IMR-90 (cell line): ENCODE measurements at regions of chr2 and their contacts with region 1.

Region 1: DNA sequence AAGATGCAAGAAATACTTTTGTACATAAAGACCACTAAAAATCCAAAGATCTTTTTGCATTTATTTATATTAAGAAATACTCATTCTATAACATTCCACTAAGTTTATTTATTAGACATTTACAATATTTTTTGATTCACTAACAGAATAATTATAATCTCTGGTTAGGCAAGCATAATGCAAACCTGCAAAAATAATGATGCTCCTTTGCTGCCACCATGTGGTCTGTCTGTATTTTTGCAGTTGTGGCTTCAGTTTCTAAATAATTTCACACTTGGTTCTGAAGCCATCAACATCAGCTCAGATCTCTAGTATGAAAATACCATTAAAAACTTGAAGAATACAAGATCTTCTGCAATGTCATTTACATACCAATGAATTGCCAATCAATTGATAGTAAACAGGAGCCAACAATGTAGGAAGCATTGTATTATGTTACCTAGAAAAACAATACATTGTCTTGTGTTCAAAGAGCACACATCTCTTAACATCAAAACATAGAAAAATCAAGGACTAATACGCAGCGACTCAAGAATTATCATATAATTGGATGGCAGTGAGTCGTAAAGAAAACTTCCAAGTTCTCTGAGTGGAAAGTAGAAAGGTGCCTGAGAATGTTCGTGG is 28.8 kb upstream of the WDR75 start:
- DNase-seq: peak; percentile 74
- ATAC-seq: peak; percentile 70
- H3K4me3 ChIP-seq: no peak overlapping the region
- H3K27ac ChIP-seq: peak overlapping the region; percentile 81; the same call in 1 of the 2 replicates
- H3K4me1 ChIP-seq: peaks cover 14% of the 10 kb centered on the region
- H3K27me3 ChIP-seq: no peaks in the 10 kb centered on the region
- CTCF ChIP-seq: peak; percentile 80
- POLR2A ChIP-seq: no peak
- RAD21 ChIP-seq: peak; percentile 88

Region 2: GRCh38 chr2:188303363-188304031 is 1108.9 kb before region 1 on chr2:
- CTCF ChIA-PET with region 1: no interaction called
- POLR2A ChIA-PET with region 1: no interaction called
- dilution Hi-C with region 1: no loop called
- in situ Hi-C with region 1: loop called (anchors 25 kb)
- intact Hi-C with region 1: no loop called
- DNase-seq: peak; percentile 71
- ATAC-seq: peak; percentile 91
- H3K4me3 ChIP-seq: peak overlapping the region; percentile 0; the same call in 1 of the 2 replicates
- H3K27ac ChIP-seq: peak overlapping the region; percentile 12
- H3K4me1 ChIP-seq: peaks cover 13% of the 10 kb centered on the region
- H3K27me3 ChIP-seq: no peaks in the 10 kb centered on the region
- CTCF ChIP-seq: no peak
- POLR2A ChIP-seq: no peak
- RAD21 ChIP-seq: no peak

Region 3: DNA sequence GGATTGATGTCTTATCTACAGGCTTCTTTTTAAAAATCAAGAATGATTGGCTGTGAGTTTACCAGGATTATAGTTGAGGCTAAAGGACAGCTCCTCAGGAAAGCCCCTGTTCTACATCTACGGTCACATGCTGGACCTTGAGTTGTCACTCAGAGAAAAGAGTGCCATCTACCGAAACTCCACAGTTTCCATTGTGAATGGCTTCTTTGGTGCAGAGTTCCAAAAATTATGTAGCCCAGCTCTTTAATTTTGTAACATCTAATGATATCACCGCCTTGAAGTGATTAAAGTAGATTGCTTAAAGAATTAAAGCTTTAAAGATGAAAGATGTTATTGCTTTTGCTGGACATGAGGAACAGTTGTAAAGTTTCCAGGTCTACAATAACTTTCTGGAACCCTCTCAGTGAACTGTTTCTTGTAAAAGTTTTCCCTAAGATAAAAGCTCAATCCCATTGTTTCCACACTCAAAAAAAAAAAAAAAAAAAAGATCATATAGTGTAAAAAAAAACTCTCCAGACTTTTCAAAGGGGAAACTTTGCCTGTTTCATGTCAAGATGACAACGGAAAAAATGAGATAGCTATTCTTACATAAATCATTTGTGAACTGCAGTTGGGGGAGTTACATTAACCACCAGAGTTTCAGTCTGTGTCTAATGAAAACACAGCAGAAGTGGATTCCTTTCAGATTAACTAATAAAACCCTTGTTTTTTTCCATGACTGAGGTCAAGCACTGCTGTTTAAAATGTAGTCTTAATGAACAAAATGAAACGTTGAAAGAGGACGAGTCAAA is 434.0 kb before region 1 on chr2:
- CTCF ChIA-PET with region 1: no interaction called
- POLR2A ChIA-PET with region 1: no interaction called
- dilution Hi-C with region 1: no loop called
- in situ Hi-C with region 1: no loop called
- intact Hi-C with region 1: loop called (anchors 2 kb)
- DNase-seq: peak; percentile 69
- ATAC-seq: peak; percentile 12; the same call in 1 of the 2 replicates
- H3K4me3 ChIP-seq: peak overlapping the region; percentile 19
- H3K27ac ChIP-seq: peak overlapping the region; percentile 74; the same call in 1 of the 2 replicates
- H3K4me1 ChIP-seq: peaks cover 3% of the 10 kb centered on the region
- H3K27me3 ChIP-seq: no peaks in the 10 kb centered on the region
- CTCF ChIP-seq: peak; percentile 43
- POLR2A ChIP-seq: no peak
- RAD21 ChIP-seq: peak; percentile 51

Region 4: DNA sequence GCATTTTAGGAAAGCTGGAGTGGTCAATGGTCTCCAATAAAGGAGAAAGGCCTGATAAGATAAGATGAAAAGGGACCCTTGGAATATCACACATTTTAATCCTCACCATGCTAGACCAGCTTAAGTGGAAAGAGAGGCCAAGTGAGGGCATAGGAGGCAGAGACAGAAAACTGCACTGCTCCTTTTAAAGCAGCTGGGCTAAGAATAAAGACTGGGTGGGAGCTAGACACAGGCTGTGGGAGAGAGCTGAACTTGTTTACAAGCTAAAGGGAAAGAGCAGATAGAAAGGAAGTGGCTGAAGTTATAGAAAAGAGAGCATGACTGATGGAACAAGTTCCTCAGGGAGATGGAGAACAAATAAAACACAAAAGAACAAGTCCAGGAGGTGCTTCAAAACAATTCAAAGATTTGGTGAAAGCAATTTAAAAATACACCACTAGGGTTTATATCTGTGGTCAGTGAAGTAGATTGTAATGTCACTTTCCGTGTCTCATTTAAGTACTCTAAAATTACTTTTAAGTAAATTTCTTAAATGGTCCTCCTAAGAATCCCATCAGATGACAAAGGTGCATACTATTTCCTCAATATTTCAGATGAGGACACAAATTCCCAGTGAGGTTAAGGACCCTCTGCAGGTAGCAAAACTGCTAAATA is 240.4 kb before region 1 on chr2:
- CTCF ChIA-PET with region 1: no interaction called
- POLR2A ChIA-PET with region 1: no interaction called
- dilution Hi-C with region 1: no loop called
- in situ Hi-C with region 1: loop called (anchors 5 kb)
- intact Hi-C with region 1: no loop called
- DNase-seq: no peak
- ATAC-seq: 0 out of 2 replicates have a peak, but pooled peaks have one; percentile 13
- H3K4me3 ChIP-seq: no peak overlapping the region
- H3K27ac ChIP-seq: peak overlapping the region; percentile 4; the same call in 1 of the 2 replicates
- H3K4me1 ChIP-seq: peaks cover 22% of the 10 kb centered on the region
- H3K27me3 ChIP-seq: no peaks in the 10 kb centered on the region
- CTCF ChIP-seq: no peak; the same call in 1 of the 2 replicates
- POLR2A ChIP-seq: no peak
- RAD21 ChIP-seq: no peak

Region 5: GRCh38 chr2:189297446-189297845 is 115.0 kb before region 1 on chr2:
- CTCF ChIA-PET with region 1: no interaction called
- POLR2A ChIA-PET with region 1: no interaction called
- dilution Hi-C with region 1: no loop called
- in situ Hi-C with region 1: loop called (anchors 10 kb)
- intact Hi-C with region 1: no loop called
- DNase-seq: peak; percentile 86
- ATAC-seq: peak; percentile 56; the same call in 1 of the 2 replicates
- H3K4me3 ChIP-seq: no peak overlapping the region
- H3K27ac ChIP-seq: no peak overlapping the region
- H3K4me1 ChIP-seq: peaks cover 4% of the 10 kb centered on the region; the same call in 1 of the 2 replicates
- H3K27me3 ChIP-seq: no peaks in the 10 kb centered on the region
- CTCF ChIP-seq: no peak
- POLR2A ChIP-seq: no peak
- RAD21 ChIP-seq: no peak

Region 6: GRCh38 chr2:189580241-189580651 is 167.8 kb after region 1 on chr2:
- CTCF ChIA-PET with region 1: no interaction called
- POLR2A ChIA-PET with region 1: no interaction called
- dilution Hi-C with region 1: no loop called
- in situ Hi-C with region 1: no loop called
- intact Hi-C with region 1: no loop called
- DNase-seq: no peak
- ATAC-seq: peak; percentile 38
- H3K4me3 ChIP-seq: peak overlapping the region; percentile 73
- H3K27ac ChIP-seq: peak overlapping the region; percentile 20
- H3K4me1 ChIP-seq: peaks cover 2% of the 10 kb centered on the region; the same call in 1 of the 2 replicates
- H3K27me3 ChIP-seq: peaks cover 2% of the 10 kb centered on the region; the same call in 1 of the 2 replicates
- CTCF ChIP-seq: no peak
- POLR2A ChIP-seq: no peak
- RAD21 ChIP-seq: no peak